AG04449 (cell line): ENCODE measurements at regions of chr10 and their contacts with region 1.

Region 1: DNA sequence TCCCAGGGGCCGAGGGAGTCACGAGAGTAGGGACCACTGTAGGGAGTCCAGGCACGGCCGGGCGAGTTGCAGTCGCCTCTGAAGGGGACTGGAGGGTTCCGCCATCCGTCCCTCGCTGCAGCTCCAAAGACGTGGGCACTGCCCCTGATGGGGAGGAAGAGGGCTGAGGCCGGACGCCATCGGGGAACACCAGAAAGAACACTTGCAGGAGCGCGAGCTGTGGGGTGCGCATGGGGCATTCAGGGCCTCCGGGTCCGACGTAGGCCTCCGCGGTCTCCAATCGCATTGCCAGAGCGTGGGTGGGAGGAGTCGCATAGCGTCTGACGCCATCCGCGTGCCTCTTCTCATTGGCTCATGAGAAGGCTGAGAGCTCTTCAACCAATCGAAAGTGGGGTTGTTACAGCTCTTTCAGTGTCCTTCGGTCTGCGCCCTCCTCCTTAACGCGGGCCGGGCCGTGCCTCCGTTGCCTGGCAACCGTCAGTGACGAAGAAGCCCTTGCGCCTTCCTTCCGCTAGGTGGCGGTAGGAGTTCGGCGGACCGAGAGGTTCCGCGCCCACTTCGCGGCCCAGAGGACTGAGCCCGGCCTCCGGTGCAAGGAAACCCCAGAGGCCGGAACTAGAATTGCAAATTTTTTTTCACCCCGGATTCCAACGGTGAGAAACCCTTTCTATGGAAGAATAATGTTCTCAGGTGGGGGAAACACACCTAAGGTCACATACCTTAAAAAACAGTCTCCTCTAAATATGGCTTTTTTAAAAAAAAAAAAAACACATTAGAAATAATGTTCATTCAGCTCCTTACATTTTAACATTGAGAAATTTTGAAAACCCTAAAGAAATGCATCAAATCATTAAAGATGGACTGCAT is at the start of gene TCTN3:
- DNase-seq: peak; percentile 98
- H3K4me3 ChIP-seq: peak within 1 kb of the TSS; percentile 98
- CTCF ChIP-seq: peak; percentile 100

Region 2: DNA sequence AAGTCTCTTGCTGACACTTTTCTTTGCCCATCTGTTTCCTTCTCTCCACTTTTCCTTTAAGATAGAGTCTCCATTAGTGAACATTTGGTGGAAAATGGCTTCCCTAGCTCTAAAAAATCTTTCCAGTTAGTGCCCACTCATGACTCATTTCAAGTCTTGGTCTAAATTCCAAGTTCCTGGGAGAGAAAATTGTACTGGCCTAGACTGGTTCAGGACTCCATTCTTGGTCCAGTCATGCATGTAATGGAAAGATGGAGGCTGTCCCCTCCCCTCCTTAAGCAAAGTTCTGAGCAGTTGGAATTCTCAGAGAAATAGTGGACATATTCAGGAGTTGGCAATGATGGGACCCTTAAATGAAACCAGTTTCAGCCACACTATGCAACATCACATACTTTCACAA is 33.6 kb before region 1 on chr10:
- CTCF ChIA-PET with region 1: interaction called, 20 read pairs
- POLR2A ChIA-PET with region 1: no interaction called
- DNase-seq: no peak
- H3K4me3 ChIP-seq: no peak overlapping the region
- CTCF ChIP-seq: no peak

Region 3: DNA sequence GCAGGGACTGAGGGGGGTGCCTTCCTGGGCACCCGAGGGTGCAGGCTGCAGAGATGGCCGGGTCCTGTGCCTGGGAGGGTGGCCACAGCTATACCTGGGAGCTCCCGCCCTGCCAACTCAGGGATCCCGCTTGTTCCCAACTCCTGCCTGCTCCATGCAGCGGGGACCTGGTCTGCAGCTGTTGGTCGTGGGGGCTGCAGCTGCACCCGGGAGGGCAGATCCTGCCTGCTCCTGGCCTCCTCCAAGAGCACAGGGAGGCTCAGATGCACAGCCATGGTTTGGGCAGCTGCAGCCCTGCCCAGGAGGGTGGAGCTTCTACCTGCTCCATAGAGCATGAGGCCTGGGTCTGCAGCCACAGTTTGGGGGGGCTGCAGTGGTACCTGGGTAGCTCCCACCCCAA is 13.1 kb after region 1 on chr10:
- CTCF ChIA-PET with region 1: interaction called, 39 read pairs
- POLR2A ChIA-PET with region 1: no interaction called
- DNase-seq: no peak
- H3K4me3 ChIP-seq: no peak overlapping the region
- CTCF ChIP-seq: no peak

Region 4: DNA sequence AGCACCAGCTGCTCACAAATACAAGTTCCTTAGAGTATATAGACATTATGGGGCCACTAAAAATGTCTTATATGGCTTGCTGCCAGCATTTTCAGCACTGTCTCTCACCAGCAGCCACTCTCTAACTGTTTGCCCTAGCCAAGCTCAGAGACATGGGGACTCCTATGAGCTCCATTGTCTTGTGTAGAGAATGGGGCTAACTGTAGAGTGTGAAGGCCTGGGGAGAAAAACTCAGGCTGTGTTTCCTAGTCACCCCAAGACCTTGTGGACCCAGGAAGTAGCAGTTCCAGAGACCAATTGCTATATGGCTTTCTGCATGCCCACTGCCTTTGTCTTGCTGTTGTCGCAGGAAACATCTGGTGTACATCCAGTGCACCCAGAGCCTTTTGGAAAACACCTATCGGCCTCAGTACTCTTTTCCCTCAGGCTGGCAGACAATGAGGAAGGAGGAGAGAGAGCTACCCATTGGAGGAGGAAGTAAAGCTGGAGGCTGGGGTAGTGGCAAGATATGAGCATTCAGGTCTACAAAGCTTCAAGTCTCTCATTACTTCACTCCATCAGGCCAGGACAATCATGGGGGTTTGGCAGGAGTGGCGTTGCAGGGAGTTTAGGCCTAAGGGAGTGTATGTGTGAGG is 90.5 kb after region 1 on chr10:
- CTCF ChIA-PET with region 1: interaction called, 19 read pairs
- POLR2A ChIA-PET with region 1: no interaction called
- DNase-seq: no peak
- H3K4me3 ChIP-seq: no peak overlapping the region
- CTCF ChIP-seq: no peak

Region 5: DNA sequence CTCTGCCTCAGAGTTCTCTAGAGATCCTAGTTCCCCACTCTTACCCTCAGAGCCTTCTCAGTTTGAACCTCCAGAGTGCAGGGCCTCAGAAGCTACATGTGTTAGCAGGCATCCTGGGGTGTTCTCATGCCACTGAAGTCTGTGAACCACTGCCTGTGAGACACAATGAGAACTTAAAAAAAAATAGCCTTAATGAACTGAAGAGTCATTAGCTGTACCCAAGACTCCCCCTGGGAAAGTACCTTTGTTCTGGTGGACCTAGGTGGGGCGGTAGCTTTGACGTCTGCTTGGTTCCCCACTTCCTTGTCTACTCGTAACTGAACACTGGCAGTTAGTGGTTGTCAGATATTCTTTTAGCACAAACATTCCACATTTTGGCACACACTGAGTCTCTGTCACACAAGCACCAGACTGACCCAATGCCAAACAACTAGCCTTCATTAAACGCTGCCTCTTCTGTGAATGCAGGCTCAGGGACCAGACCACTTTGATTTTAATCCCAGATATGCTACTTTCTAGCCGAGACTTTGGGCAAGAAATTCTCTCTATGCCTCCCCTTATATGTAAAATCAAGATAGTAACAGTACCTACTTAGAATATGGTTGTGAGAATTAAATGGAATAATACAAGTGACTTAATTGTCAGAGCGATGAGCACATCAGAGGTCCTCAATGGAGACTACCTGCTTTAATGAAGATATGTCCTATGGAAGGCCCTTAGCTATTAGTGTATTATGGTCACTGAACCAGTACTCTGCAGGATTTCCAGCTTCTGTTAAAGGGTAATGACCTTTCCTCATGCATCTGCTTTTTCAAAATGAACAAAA is 138.5 kb after region 1 on chr10:
- CTCF ChIA-PET with region 1: interaction called, 495 read pairs
- POLR2A ChIA-PET with region 1: interaction called, 4 read pairs
- DNase-seq: no peak
- H3K4me3 ChIP-seq: no peak overlapping the region
- CTCF ChIP-seq: no peak

Region 6: GRCh38 chr10:95864906-95865813 is 171.3 kb after region 1 on chr10:
- CTCF ChIA-PET with region 1: interaction called, 141 read pairs
- POLR2A ChIA-PET with region 1: no interaction called
- DNase-seq: peak; percentile 33
- H3K4me3 ChIP-seq: no peak overlapping the region
- CTCF ChIP-seq: peak; percentile 71

Region 7: GRCh38 chr10:95907456-95908253 is 213.8 kb after region 1 on chr10 and contains the start of gene CC2D2B:
- CTCF ChIA-PET with region 1: interaction called, 26 read pairs
- POLR2A ChIA-PET with region 1: interaction called, 4 read pairs
- DNase-seq: no peak
- H3K4me3 ChIP-seq: peak within 1 kb of the TSS; percentile 88
- CTCF ChIP-seq: peak; percentile 21